ENCODE measurements at regions of chr12 and their contacts with region 1.

Region 1: GRCh38 chr12:94386422-94386821 is 73.2 kb downstream of the CEP83 start:
- DNase-seq: no peak
- H3K4me3 ChIP-seq: no peak overlapping the region
- H3K27ac ChIP-seq: no peak overlapping the region
- H3K4me1 ChIP-seq: no peaks in the 10 kb centered on the region
- H3K27me3 ChIP-seq: no peaks in the 10 kb centered on the region
- CTCF ChIP-seq: no peak

Region 2: GRCh38 chr12:94445662-94446061 is 59.2 kb after region 1 on chr12:
- CTCF ChIA-PET with region 1: no interaction called
- POLR2A ChIA-PET with region 1: interaction called, 4 read pairs
- intact Hi-C with region 1: loop called (anchors 2 kb)
- DNase-seq: no peak
- H3K4me3 ChIP-seq: no peak overlapping the region
- H3K27ac ChIP-seq: no peak overlapping the region
- H3K4me1 ChIP-seq: no peaks in the 10 kb centered on the region
- H3K27me3 ChIP-seq: no peaks in the 10 kb centered on the region
- CTCF ChIP-seq: no peak